ENCODE measurements at regions of chr1 and their contacts with region 1.

Region 1: GRCh38 chr1:228139944-228140656 is at the start of gene GUK1:
- DNase-seq: peak; percentile 98 to 100 (median 100)
- ATAC-seq: peak; percentile 93
- H3K4me3 ChIP-seq: peak within 1 kb of the TSS; percentile 88
- H3K4me3 Mint-ChIP-seq: peak within 1 kb of the TSS; percentile 87 to 99 (median 95)
- H3K27ac ChIP-seq: peak within 1 kb of the TSS; percentile 99
- H3K27ac Mint-ChIP-seq: peak within 1 kb of the TSS; percentile 83 to 100 (median 99)
- H3K4me1 ChIP-seq: peaks cover 42 to 49% of the 10 kb centered on the region in 2 donors
- H3K4me1 Mint-ChIP-seq: peaks cover 23 to 48% (median 34%) of the 10 kb centered on the region in 7 donors
- H3K27me3 ChIP-seq: no peaks in the 10 kb centered on the region
- H3K27me3 Mint-ChIP-seq: peaks cover 0 to 24% (median 0%) of the 10 kb centered on the region in 5 donors
- total RNA-seq, gene GUK1: 145 to 309 (median 279) TPM

Region 2: DNA sequence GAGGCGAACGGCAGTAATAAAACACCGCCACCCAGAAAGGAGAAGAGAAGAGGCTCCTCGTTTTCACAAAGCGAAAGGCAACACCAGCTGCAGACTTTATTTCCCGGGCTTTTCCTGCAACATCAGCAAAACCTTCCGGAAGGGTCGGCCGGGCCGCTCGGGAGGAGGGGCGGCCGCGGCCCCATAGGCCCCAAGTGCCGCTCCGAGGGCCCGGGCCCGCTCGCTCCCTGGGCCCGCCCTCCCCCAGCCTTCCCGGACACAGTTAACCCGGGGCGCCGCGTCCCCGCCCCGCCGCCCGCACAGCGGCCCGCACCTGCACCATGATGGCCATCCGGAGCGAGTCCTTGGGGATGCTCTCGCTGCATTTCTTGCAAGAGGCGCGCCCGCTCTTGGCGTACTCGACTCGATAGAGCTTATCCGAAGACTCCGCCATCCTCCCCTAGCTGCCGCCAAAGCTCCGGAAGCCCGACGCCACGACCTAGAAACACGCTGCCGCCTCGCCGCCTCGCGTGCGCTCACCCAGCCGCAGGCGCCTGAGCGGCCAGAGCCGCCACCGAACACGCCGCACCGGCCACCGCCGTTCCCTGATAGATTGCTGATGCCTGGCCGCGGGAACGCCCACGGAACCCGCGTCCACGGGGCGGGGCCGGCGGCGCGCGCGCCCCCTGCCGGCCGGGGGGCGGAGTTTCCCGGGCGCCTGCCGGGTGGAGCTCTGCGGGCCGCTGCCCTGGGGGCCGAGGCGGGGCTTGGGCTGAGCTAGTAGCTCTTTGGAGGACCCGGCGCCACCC is 1732.4 kb before region 1 on chr1 and contains the start of gene PARP1:
- CTCF ChIA-PET with region 1: no interaction called
- POLR2A ChIA-PET with region 1: no interaction called
- intact Hi-C with region 1: loop called in 1 of 2 experiments (anchors 5 kb)
- DNase-seq: peak; percentile 83 to 93 (median 89)
- ATAC-seq: peak; percentile 94
- H3K4me3 ChIP-seq: peak within 1 kb of the TSS; percentile 82
- H3K4me3 Mint-ChIP-seq: peak within 1 kb of the TSS; percentile 89 to 99 (median 94)
- H3K27ac ChIP-seq: peak within 1 kb of the TSS; percentile 74
- H3K27ac Mint-ChIP-seq: peak within 1 kb of the TSS; percentile 68 to 96 (median 93)
- H3K4me1 ChIP-seq: peaks cover 23 to 30% of the 10 kb centered on the region in 2 donors
- H3K4me1 Mint-ChIP-seq: peaks cover 37 to 46% (median 40%) of the 10 kb centered on the region in 7 donors
- H3K27me3 ChIP-seq: no peaks in the 10 kb centered on the region
- H3K27me3 Mint-ChIP-seq: peaks cover 0 to 3% (median 0%) of the 10 kb centered on the region in 5 donors
- total RNA-seq, gene PARP1: 63.6 to 165 (median 89.3) TPM

Region 3: GRCh38 chr1:228102791-228103620 is 37.1 kb before region 1 on chr1 and contains the start of gene C1orf35:
- CTCF ChIA-PET with region 1: no interaction called
- POLR2A ChIA-PET with region 1: no interaction called
- intact Hi-C with region 1: loop called (anchors 1 kb)
- DNase-seq: peak; percentile 90 to 97 (median 93)
- ATAC-seq: peak; percentile 85
- H3K4me3 ChIP-seq: peak within 1 kb of the TSS; percentile 95
- H3K4me3 Mint-ChIP-seq: peak within 1 kb of the TSS; percentile 91 to 97 (median 93)
- H3K27ac ChIP-seq: peak within 1 kb of the TSS; percentile 94
- H3K27ac Mint-ChIP-seq: peak within 1 kb of the TSS; percentile 90 to 95 (median 94)
- H3K4me1 ChIP-seq: peaks cover 17 to 20% of the 10 kb centered on the region in 2 donors
- H3K4me1 Mint-ChIP-seq: peaks cover 6 to 43% (median 23%) of the 10 kb centered on the region in 7 donors
- H3K27me3 ChIP-seq: no peaks in the 10 kb centered on the region
- H3K27me3 Mint-ChIP-seq: no peaks in the 10 kb centered on the region
- total RNA-seq, gene C1orf35: 16.8 to 31.8 (median 27.8) TPM

Region 4: GRCh38 chr1:228154670-228155571 is 14.8 kb after region 1 on chr1:
- CTCF ChIA-PET with region 1: no interaction called
- POLR2A ChIA-PET with region 1: interaction called, 5 read pairs
- intact Hi-C with region 1: loop called in 1 of 2 experiments (anchors 2 kb)
- DNase-seq: peak in 1 of 9 donors; percentile 42
- ATAC-seq: no peak
- H3K4me3 ChIP-seq: no peak overlapping the region
- H3K4me3 Mint-ChIP-seq: peak overlapping the region in 3 of 10 donors; percentile 12 to 47 (median 31)
- H3K27ac ChIP-seq: peak overlapping the region; percentile 27
- H3K27ac Mint-ChIP-seq: peak overlapping the region in 7 of 9 donors; percentile 24 to 89 (median 64)
- H3K4me1 ChIP-seq: peaks cover 0 to 7% of the 10 kb centered on the region in 2 donors
- H3K4me1 Mint-ChIP-seq: peaks cover 0 to 20% (median 12%) of the 10 kb centered on the region in 7 donors
- H3K27me3 ChIP-seq: no peaks in the 10 kb centered on the region
- H3K27me3 Mint-ChIP-seq: no peaks in the 10 kb centered on the region

Region 5: DNA sequence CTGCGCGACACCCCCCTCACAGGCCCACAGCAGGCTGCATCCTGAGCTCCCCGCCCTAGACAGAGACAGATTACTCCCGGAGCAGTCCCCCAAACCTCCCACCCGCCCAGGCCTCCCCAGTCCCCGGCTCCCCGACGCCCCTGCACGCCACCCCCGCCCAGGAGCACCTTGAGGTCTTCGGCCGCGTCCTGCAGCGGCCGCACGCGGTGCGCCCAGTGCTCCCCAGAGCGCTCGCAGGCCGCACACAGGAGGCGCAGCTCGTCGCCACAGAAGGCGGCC is 265.8 kb after region 1 on chr1:
- CTCF ChIA-PET with region 1: no interaction called
- POLR2A ChIA-PET with region 1: interaction called, 3 read pairs
- intact Hi-C with region 1: loop called (anchors 1 to 2 kb)
- DNase-seq: no peak
- ATAC-seq: no peak
- H3K4me3 ChIP-seq: peak overlapping the region; percentile 74
- H3K4me3 Mint-ChIP-seq: peak overlapping the region; percentile 80 to 99 (median 94)
- H3K27ac ChIP-seq: peak overlapping the region; percentile 86
- H3K27ac Mint-ChIP-seq: peak overlapping the region; percentile 36 to 92 (median 80)
- H3K4me1 ChIP-seq: peaks cover 36 to 41% of the 10 kb centered on the region in 2 donors
- H3K4me1 Mint-ChIP-seq: peaks cover 46 to 77% (median 56%) of the 10 kb centered on the region in 7 donors
- H3K27me3 ChIP-seq: no peaks in the 10 kb centered on the region
- H3K27me3 Mint-ChIP-seq: no peaks in the 10 kb centered on the region

Region 6: DNA sequence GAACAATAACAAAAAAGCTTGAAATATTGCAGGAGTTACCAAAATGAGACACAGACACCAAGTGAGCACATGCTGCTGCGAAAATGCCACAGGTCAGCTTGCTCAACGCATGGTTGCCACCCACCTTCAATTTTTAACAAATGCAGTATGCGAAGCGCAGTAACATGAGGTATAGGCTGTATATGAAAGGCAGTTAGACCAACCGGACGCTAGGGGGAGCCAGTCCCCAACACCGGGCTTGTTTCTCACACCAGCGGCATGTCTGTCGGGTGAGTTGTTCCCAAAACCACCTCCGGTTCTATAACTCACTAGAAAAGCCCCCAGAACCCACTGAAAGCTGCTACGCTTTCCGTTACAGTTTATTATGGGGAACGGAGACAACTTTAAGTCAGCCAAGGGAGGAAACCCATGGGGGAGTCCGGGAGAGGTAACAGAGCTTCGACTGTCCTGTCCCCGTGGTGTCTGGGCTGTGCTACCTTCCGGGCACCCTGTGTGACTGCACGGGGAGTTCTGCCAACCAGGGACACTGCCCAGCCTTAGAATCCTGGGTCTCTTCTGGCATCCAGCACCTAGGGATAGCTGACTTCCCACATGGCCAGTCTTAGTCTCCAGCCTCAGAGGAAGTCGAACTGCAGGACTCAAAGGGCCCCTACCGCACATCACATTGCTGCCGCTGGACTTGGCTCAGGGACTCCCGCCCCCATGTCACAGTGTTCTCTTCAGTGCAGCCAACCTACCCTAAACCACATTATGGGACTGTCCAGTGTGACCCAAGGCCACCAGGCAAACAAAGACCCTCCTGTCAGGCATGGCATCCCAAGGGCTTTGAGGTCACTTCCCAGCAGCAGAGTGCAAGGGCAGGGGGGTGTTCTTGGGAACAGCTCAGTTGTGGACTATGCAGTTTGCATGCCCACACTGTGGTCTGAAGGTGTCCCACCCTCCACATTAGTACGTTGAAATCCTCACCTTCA is 361.1 kb after region 1 on chr1:
- CTCF ChIA-PET with region 1: interaction called, 3 read pairs
- POLR2A ChIA-PET with region 1: no interaction called
- intact Hi-C with region 1: loop called in 1 of 2 experiments (anchors 2 kb)
- DNase-seq: peak; percentile 72 to 89 (median 85)
- ATAC-seq: peak; percentile 99
- H3K4me3 ChIP-seq: peak overlapping the region; percentile 44
- H3K4me3 Mint-ChIP-seq: peak overlapping the region; percentile 71 to 86 (median 80)
- H3K27ac ChIP-seq: no peak overlapping the region
- H3K27ac Mint-ChIP-seq: peak overlapping the region in 5 of 9 donors; percentile 19 to 72 (median 66)
- H3K4me1 ChIP-seq: peaks cover 9 to 14% of the 10 kb centered on the region in 2 donors
- H3K4me1 Mint-ChIP-seq: peaks cover 9 to 31% (median 18%) of the 10 kb centered on the region in 7 donors
- H3K27me3 ChIP-seq: no peaks in the 10 kb centered on the region
- H3K27me3 Mint-ChIP-seq: peaks cover 0 to 8% (median 0%) of the 10 kb centered on the region in 5 donors

Measured in naive thymus-derived CD4-positive, alpha-beta T cell (primary cell).